AG04450 (cell line): ENCODE measurements at regions of chr17 and their contacts with region 1.

Region 1: DNA sequence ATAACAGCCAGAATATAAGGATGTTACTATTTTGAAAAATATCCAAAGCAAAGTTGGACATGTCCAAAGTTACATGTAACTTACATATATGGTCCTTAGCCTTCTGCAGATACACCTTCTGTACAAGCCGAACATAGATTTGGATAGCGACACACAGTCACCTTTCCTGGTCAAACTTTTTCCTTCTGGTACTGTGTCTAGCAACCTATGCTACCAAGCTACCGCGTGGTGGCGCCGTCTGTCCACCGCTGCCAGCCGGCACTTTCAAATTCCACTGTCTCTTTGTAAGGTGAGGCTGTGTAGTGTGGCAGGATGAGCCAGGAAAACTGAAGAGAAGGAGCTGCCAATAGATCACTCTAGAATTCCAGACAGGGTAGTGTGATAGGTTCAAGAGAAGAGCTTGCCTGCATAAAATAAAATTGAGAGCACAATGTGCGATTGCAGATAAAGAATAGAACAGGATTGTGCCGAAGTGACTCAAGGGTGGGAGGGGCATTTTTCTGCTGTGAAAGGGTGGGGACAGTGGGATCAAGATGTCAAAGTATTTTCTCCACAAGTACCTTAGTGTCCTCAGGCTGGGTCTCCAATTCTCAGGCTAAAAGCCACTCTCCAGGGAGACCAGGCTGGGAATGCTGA is 366.9 kb downstream of the SLC39A11 start:
- DNase-seq: no peak
- H3K4me3 ChIP-seq: no peak overlapping the region
- H3K27ac ChIP-seq: no peak overlapping the region
- H3K27me3 ChIP-seq: no peaks in the 10 kb centered on the region
- CTCF ChIP-seq: peak; percentile 98

Region 2: GRCh38 chr17:72297326-72298115 is 428.0 kb before region 1 on chr17:
- CTCF ChIA-PET with region 1: no interaction called
- POLR2A ChIA-PET with region 1: no interaction called
- DNase-seq: no peak
- H3K4me3 ChIP-seq: no peak overlapping the region
- H3K27ac ChIP-seq: no peak overlapping the region
- H3K27me3 ChIP-seq: no peaks in the 10 kb centered on the region
- CTCF ChIP-seq: no peak

Region 3: GRCh38 chr17:72556944-72557826 is 168.4 kb before region 1 on chr17:
- CTCF ChIA-PET with region 1: interaction called, 242 read pairs
- POLR2A ChIA-PET with region 1: interaction called, 4 read pairs
- DNase-seq: no peak
- H3K4me3 ChIP-seq: no peak overlapping the region
- H3K27ac ChIP-seq: no peak overlapping the region
- H3K27me3 ChIP-seq: no peaks in the 10 kb centered on the region
- CTCF ChIP-seq: peak; percentile 91

Region 4: GRCh38 chr17:72592242-72592966 is 133.1 kb before region 1 on chr17:
- CTCF ChIA-PET with region 1: interaction called, 22 read pairs
- POLR2A ChIA-PET with region 1: interaction called, 6 read pairs
- DNase-seq: peak; percentile 67
- H3K4me3 ChIP-seq: peak overlapping the region; percentile 96
- H3K27ac ChIP-seq: peak overlapping the region; percentile 21
- H3K27me3 ChIP-seq: no peaks in the 10 kb centered on the region
- CTCF ChIP-seq: no peak

Region 5: DNA sequence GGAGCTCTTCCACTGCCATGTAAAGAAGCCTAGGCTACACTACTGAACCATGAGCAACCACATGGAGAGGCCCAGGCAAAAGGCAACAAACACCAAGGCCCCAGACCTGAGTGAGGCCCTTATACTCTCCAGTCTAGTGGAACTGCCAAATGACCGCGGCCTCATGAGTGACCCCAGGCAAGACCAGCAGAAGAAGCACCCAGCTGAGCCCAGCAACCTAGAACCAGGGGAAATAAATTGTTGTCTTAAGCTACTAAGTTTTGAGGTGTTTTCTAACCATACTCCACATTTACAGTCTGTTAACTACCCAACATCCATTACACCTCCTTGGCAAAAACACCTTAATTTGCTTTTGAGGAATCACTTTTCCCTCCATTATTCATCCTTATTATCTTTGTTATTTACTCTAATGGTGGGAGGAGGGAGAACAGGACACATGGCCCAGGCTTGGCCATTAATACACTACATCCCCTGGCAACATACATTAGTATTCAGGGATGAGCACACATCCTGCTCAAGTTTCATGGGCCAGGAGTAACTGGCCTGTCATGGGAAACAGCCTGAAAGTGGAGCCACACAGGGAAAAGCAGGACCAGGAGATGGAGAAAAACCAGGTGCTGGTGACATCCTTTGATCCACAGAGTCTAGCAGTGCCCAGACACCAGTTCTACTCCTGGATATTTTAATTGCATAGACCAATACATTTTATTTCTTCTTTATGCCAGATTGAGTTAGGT is 340.8 kb after region 1 on chr17:
- CTCF ChIA-PET with region 1: interaction called, 5 read pairs
- POLR2A ChIA-PET with region 1: interaction called, 14 read pairs
- DNase-seq: no peak
- H3K4me3 ChIP-seq: no peak overlapping the region
- H3K27ac ChIP-seq: no peak overlapping the region
- H3K27me3 ChIP-seq: no peaks in the 10 kb centered on the region
- CTCF ChIP-seq: no peak

Region 6: DNA sequence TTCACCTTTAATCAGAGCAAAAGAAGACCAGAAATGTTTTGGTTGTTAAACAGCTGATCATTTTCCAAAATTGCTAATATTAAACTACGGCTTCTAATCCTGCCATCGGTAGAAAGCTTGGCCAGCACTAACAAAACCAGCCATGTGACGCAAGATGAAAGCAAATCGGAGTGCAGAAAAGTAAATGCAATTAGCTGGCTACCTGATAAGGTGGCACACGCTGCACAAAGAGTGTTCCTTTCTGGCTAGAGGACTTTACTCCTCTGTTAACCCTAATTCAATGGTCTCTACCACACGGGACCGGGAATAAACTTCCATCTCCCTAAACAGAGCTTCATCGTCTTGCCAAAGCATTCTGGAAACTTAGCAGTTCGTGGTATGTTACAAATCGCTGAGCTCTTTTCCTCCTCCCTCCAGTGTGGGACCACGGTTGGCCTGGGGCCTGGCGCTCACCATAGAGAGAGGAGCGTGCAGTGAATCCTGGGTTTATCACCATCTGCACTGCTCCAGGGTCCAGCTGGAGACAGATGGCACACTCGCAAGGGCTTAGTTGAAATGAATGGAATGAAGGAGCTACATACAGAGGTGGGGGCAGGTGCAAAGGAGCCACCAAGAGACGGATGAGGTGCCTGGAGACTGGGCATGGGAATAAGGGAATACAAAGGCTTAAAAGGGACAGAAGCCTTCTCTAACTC is 457.2 kb after region 1 on chr17:
- CTCF ChIA-PET with region 1: interaction called, 243 read pairs
- POLR2A ChIA-PET with region 1: no interaction called
- DNase-seq: peak; percentile 6
- H3K4me3 ChIP-seq: no peak overlapping the region
- H3K27ac ChIP-seq: no peak overlapping the region
- H3K27me3 ChIP-seq: peaks cover 2% of the 10 kb centered on the region
- CTCF ChIP-seq: no peak

Region 7: DNA sequence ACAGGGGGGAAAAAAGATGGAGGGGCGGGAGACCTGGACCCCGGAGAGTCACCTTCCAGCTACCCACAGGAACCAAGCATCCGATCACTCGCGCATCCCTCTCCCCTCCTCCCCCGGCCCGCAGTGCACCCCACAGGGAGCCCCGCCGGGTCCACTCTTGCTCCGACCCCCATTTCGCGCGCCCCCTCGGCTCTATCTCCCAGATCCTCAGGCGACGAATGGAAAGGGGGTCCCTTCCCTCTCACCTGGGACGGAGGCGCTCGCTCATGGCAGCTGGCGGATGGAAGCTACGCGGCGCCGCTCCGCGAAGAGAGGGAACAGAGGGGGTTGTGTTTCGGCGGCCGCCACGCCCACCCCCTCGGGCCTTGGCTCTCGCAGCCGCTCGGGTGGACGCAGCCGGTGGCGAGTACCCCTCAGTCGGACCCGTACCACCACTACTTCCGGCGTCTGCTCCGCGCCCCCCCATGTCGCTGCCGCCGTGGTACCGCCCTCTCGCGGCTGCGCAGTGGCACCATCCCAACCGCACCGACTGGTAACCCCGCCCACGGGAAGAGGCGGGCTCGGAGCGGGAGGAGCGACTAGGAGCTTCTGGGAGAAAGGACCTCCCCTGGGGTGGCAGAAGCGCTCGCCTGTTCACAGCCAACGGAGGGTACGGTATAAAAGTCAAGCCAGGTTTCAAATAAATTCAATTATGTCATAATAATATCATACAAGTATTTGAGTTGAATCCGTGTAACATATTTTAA is 506.5 kb after region 1 on chr17:
- CTCF ChIA-PET with region 1: interaction called, 36 read pairs
- POLR2A ChIA-PET with region 1: interaction called, 3 read pairs
- DNase-seq: peak; percentile 88
- H3K4me3 ChIP-seq: peak overlapping the region; percentile 90
- H3K27ac ChIP-seq: peak overlapping the region; percentile 39
- H3K27me3 ChIP-seq: no peaks in the 10 kb centered on the region
- CTCF ChIP-seq: peak; percentile 28; the same call in 1 of the 2 replicates

Region 8: DNA sequence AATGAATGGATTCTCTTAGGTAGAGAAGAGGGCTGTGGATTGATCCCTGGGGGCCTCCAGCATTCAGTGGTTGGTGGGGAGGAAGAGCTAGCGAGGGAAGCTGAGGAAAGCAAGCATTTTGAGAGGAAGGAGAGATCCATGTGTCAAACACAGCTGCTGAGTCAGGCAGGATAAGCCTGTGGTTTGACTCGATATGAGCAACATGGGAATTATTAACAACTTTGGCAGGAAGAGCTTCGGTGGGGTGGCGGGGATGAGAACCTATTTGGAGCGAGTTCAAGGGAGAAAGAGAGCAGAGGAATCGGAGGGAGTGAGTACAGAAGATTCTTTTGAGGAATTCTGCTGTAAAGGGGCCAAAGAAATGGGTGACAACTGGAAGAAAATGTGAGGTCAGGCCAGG is 645.7 kb after region 1 on chr17:
- CTCF ChIA-PET with region 1: interaction called, 43 read pairs
- POLR2A ChIA-PET with region 1: no interaction called
- DNase-seq: peak; percentile 73
- H3K4me3 ChIP-seq: no peak overlapping the region
- H3K27ac ChIP-seq: no peak overlapping the region
- H3K27me3 ChIP-seq: peaks cover 24% of the 10 kb centered on the region
- CTCF ChIP-seq: no peak